Right ventricle myocardium superior (tissue), 1 donor: ENCODE measurements at regions of chr1 and their contacts with region 1.

Region 1: DNA sequence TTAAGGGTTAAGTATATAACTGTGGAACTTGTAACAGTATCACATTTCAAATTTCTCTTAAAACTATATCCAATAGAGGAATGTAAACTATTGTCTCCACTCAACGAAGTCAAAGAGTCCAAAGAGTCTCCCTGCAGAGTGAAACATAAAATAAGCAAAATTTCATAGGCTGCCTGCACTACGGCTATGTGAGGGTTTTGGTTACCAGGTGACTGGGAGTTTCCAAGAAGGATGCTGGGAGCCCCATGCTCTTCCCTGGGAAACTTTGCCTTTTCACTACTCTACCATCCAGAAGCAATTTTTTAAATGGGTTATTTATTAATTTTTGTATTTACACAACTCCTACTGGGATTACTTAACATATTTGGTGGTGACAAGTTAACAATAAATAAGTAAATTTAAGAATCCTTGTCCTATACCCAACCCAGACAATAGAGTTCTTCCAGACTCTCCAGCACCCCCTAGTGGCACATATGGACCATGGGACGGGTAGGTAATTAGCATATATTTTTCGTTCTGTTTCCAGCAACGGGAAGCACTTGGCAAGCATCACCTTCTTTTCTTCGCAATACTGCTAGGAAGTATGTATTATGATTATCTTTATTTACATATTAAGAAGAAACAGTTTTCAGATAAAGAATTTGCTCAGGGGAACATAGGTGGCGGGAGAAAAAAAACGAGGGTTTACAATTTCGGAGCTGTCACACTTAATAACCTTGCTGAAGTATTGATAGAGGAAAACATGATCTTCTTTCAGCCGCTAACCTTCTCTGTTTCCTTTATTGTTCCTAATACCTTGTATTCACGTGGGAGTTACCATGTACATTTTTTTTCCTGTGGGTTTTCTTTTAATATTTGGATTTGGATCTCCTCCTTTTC is 3.5 kb downstream of the FMO2 start:
- DNase-seq: peak; percentile 48
- ATAC-seq: peak; percentile 71

Region 2: DNA sequence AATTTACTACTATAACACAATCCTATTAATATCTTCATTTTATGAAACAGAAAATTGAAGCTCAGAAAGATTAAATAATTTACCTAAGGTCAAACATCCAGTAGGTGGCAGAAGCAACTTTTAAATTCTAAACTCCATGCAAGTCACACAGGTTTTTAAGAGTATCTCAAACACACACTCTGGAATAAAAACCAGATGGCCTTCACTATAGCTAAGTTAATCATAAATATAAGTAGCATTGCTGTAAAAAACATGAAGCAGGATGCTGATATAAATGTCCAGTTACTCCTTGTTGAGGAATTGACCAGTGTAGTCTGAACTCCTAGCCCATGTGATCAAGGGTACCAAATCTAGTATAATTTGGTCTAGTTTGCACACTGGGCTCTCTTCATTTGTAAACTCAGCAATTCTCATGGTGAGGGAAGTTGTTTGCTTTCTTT is 107.3 kb before region 1 on chr1:
- intact Hi-C with region 1: loop called (anchors 10 kb)
- DNase-seq: no peak
- ATAC-seq: peak; percentile 64

Region 3: GRCh38 chr1:171127501-171127900 is 61.1 kb before region 1 on chr1:
- intact Hi-C with region 1: no loop called
- DNase-seq: no peak
- ATAC-seq: peak; percentile 18

Region 4: DNA sequence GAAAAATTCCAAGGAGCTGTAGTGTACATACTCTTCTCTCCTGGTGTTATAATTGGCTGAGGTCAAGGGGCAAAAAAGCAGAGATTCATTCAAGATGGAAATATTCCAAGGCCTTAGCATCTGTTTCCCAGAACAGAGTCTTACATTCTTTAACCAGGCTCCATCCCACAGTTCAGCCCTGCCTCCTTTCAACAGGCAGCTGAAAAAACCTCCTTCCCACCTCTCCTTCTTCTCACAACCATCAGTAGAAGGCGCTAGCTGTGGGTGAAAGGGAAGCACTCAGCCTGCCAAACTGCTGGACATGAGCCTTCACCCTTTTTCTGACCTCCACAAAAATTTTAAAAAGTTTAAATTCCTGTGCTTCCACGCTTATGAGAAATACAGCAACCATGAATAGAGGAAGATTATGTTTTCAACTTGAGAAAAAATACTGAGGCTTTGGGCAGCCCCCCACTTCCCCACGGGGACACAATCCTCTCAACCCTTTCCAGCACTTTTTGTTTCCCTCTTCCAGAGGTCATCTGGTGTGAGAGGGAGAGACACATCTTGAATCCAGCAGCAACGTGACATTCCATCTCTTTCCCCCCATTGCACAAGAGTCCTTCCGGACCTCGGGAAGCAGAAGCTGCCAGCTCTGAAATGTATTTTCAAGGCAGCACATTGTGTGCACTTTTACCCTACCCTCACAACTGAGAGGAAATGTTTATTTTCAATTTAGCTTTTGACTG is 46.8 kb before region 1 on chr1:
- intact Hi-C with region 1: loop called (anchors 5 kb)
- DNase-seq: peak; percentile 56
- ATAC-seq: peak; percentile 75